Right ventricle myocardium inferior (tissue), 1 donor: ENCODE measurements at regions of chr1 and their contacts with region 1.

Region 1: DNA sequence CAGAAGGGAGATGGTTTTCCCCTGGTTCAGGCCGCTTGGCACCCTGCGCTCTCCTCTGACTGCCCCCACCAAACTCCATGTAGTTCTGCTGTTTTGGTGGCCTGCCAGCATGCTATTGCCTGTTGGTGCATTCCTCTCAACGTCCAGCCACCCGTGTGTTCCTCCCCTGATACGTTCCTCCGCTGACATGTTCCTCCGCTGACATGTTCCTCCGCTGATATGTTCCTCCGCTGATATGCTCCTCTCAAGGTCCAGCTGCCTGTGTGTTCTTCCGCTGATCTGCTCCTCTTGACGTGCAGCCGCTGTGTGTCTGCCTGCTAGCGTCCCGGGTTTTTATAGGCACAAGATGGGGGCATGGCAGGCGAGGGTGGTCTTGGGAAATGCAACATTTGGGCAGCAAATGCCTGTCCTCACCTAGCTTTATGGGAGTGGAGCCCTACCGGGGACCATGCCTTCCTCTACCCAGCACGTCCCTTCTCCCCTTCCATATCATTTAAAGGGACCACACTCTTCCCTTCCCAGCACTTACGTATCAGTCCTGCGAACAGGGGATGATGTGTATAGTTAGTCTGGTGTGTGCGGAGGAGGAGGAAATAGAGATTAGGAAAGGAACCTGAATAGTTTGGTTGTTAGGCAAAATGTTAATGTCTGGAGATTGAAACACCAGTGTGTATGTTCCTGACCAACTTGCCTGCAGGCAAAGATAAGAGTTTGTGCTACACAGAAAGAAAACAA is 40.6 kb upstream of the PLA2G5 start:
- DNase-seq: peak; percentile 77
- ATAC-seq: peak; percentile 62

Region 2: DNA sequence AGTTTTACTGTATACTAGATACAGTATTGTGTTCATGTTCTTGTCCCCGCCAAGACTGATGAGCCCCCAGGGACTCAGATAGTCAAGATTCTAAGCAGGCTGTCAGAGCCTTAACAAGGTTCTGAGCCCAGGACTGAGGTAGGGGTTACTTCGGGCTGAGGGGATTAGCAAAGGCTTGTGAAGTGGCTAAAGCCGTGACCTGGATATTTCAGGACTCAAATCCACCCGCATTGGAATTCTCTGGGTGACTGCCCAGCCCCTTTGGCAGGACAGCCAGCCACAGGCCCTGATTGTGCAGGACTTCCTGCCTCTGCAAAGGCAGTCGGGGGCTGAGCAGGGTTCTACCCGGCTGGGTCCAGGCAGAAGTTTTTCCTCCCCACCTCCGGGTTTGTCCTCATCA is 40.5 kb after region 1 on chr1 and contains the start of gene PLA2G5:
- intact Hi-C with region 1: loop called (anchors 2 kb)
- DNase-seq: peak; percentile 86
- ATAC-seq: peak; percentile 91
- total RNA-seq, gene PLA2G5: 65.6 TPM

Region 3: DNA sequence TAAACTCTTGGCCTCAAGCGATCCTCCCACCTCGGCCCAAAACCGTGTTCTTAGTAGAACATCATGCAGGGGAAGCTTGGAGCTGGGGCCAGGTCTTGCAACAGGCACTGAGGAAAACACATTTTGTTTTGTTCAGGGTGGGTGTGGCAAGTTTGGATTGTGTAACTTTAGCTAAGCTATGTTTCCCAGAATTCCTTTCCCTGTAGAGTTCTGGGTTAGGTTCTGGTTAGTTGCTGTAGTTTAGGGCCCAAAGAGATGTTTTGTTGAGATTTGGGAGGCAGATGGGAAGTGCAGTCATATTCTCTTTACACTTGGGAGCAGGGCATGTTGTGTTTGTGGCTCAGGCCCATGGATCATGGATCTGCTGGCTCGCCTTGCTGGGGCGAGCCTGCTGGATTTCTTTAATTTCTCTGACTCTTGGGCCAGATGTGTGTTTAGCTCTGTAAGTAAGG is 64.6 kb after region 1 on chr1:
- intact Hi-C with region 1: loop called (anchors 2 kb)
- DNase-seq: peak; percentile 86
- ATAC-seq: peak; percentile 82

Region 4: DNA sequence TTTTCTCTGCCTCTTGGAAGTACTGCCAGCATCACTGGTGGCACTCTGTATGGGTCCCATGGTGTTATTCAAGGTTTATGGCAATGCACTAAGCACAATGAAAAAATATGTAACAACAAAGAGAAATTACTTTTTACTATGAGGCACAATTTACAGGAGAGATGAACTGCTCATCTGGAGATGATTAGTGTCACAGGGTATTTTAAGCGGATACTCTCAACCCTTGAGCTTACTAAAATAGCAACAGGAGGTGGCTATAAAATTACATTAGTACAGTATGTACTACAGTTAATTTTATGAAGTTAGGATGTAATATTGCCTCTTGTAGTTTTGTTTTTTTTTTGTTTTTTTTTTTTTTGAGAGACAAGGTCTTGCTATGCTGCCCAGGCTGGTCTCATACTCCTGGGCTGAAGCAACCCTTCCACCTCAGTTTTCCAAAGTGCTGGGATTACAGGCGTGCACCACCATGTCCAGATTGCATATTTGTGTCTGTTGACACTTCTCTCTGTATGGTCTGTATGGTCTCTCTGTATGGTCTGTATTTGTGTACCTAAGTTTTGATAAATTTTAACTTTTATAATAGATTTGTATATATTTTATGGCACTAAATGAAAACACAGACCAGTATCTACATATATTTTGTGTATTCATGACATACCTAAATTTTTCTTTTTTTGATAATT is 933.4 kb after region 1 on chr1:
- intact Hi-C with region 1: no loop called
- DNase-seq: no peak
- ATAC-seq: peak; percentile 68